Cardiac septum (tissue), 1 donor: ENCODE measurements at regions of chr6 and their contacts with region 1.

Region 1: DNA sequence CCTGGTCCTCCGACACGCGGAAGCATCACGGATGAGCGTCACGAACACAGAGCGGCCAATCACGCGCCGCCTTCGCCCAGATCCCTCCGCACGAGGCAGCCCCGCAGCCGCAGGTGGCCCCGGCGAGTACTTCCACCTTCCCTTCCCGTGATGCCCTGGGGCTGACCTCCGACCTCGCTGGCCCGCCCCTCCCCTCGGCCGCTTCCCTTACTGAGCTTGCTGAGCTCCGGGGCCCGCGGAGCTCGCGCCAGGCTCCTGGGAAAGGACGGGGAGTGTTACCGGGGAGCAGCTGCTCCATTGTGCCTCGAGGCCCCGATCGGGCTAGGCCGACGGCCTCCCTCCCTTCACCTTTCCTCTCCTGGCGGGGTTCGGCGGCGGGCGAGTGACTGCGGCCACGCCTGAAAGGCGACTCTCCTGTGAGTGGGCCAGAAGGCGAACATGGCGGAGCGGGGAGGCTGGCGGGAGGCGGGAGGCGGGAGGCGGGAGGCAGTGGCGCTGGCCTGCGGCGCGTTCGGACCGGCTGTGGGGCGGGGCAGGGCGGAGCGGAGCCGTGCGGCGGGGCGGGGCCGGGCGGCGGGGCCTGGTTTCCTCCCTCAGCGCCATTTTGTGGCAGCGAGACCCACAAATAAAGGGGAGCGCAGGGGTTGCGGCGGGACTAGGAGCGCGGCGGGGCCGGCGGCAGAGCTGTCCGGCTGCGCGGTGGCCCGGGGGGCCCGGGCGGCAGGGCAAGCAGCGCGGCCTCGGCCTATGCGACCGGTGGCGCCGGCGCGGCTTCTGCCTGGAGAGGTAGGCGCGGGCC is at the start of gene WTAP:
- DNase-seq: peak; percentile 98
- total RNA-seq, gene WTAP: 49.4 TPM

Region 2: DNA sequence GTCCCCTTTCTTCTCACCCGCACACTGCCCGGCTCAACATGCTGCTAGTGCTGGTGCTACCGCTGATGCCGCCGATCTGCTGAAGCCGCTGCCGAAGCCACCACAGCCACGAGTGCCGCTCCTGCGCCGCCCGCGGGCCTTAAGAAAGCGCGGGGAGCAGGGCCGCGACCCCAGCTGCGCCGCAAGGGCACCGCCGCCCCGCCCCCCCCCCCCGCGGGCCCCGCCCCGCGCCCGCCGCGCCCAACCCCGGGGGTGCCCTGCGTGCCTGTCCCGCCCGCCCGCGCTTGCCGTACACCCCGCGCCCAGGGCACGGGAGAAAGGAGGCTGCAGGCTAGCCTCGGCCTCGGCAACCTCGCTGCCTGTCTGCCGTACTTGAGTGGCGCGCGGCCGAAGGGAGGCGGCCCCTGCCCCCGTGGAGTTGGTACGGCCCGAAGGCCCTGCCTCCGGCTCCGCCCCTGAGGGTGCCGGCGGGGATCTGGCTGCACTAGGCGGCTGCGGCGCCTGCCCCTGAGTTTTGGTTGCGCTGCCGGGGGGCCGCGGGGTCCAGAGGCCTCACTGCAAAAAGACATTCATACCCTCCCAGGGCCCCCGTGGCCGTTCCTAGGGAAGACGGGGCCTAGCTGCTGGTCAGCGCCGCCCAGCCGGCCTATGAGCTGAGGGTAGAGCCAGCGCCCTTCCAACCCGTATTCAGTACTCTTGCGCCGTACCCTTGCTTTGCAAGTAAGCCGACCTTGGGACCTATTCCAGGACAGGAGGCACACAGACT is 33.8 kb before region 1 on chr6 and contains the start of gene SOD2:
- intact Hi-C with region 1: loop called (anchors 2 kb)
- DNase-seq: peak; percentile 94
- total RNA-seq, gene SOD2: 666 TPM

Region 3: GRCh38 chr6:159761873-159762680 is 35.0 kb after region 1 on chr6 and contains the start of gene ACAT2:
- intact Hi-C with region 1: loop called (anchors 2 kb)
- DNase-seq: peak; percentile 98
- total RNA-seq, gene ACAT2: 8.7 TPM

Region 4: GRCh38 chr6:159789377-159790148 is 62.4 kb after region 1 on chr6 and contains the start of gene TCP1:
- intact Hi-C with region 1: loop called (anchors 2 kb)
- DNase-seq: peak; percentile 99
- total RNA-seq, gene TCP1: 130 TPM

Region 5: DNA sequence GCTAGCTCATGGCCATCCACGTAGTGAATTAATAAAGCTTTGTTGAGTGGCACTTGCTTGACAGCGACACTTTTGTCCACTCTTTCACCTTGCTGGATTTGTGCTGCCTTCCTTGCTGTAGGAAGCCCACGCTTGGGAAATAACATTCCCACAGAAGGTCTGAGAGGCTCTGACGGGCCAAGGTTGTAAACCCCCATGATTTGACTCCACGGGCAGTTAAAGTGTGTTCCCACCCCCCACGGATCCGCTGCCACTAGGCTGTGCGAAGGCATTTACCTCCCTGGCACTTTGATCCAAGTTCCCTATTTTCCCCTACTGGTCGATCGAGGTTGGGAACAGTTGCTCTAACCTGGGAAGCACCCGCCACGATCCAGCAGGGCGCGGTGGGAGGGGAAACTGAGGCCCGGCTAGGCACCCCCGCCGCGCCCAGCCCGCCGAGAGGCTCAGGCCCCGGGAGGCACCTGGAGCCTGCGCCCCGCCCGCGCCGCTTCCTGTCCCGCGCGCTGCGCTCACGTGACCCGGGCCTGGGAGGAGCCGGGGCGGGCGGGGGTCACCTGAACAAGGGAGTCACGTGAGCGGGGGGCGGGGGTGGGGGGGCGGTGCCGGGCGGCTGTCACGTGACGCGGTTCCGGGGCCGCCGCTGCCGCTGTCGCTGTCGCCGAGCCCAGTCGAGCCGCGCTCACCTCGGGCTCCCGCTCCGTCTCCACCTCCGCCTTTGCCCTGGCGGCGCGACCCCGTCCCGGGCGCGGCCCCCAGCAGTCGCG is 241.5 kb after region 1 on chr6 and contains the start of gene IGF2R:
- intact Hi-C with region 1: loop called (anchors 10 kb)
- DNase-seq: peak; percentile 96
- total RNA-seq, gene IGF2R: 54.6 TPM